ENCODE measurements at regions of chr19 and their contacts with region 1.

Region 1: GRCh38 chr19:11446652-11447301 is 11.3 kb downstream of the PRKCSH start:
- DNase-seq: peak; percentile 62 to 98 (median 88)

Region 2: DNA sequence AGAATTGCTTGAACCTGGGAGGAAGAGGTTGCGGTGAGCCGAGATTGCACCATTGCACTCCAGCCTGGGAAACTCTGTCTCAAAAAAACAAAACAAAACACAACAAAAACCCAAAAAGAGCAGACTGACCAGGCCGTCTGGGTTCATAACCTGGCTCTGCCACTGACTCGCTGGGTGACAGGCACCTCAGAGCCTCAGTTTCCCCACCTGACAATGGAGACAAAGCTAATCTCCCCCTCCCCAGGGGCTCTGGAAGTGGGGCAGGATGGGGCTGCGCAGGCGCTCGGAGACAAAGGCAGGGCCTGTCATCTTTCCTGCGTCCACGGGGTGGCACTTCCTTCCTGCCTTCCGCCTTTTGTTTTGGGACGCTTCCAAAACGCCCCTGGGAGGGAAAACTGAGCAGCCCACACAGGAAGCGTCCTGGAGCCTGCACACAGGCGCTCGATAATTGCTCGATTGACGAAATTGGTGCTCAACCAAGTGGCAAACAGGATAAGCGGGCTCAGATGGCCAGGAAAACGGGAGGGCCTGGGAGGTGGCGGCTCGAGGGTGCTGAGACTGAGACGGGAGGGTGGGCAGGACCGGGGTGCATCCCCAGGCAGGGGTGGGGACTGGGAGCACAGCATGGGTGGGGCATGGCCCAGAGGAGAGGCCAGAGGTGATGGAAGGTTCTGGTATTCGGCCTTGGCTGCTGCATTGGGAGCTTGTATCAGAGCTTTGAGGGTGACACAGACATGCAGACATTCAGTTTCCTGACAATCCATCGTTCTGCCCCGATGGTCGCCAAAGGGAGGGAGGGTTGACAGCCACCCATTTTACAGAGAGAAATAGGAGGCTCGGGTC is 309.0 kb before region 1 on chr19:
- intact Hi-C with region 1: loop called (anchors 10 kb)
- DNase-seq: peak; percentile 69 to 96 (median 79)

Region 3: DNA sequence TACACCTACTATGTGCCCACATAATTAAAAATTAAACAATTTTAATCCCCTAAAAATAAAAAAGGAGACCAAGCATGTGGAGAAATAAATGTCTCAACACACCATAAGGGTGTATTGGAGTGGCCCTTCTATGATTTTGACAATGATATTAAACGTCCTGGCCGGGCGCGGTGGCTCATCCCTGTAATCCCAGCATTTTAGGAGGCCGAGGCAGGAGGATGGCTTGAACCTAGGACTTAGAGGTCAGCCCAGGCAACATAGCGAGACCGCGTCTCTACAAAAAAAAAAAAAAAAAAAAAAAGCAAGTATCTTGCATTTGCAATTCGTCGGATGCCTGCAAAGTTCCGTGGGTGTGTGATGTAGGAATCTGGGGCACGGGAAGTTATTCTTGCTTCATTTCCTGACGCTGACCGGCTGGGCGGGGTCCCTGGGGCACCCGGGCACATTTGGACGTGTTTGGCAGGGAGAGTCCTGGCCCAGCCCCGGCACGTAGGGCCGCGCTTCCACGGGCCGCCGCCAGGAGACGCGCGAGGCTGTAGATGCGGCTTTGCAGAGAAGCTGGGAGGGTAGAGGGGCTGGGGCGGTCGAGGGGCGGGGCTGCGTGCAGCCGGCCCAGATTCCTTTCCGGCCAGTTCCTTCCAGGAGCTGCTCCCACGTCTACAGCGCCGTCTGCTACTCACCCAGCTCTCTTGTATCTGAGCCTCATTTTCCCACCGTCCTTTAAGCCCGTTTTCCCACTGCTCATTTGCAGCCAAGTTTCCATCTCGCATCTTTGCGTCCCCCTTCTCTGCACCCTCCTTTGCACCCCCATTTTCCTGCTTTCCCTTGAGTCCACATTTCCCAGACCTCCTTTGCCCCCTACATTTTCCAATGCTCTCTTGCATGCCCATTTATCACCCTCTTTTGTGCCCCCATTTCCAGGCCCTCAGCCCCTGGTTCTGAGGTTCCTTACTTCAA is 153.1 kb before region 1 on chr19:
- intact Hi-C with region 1: loop called (anchors 1 kb)
- DNase-seq: peak; percentile 80 to 98 (median 90)

Region 4: DNA sequence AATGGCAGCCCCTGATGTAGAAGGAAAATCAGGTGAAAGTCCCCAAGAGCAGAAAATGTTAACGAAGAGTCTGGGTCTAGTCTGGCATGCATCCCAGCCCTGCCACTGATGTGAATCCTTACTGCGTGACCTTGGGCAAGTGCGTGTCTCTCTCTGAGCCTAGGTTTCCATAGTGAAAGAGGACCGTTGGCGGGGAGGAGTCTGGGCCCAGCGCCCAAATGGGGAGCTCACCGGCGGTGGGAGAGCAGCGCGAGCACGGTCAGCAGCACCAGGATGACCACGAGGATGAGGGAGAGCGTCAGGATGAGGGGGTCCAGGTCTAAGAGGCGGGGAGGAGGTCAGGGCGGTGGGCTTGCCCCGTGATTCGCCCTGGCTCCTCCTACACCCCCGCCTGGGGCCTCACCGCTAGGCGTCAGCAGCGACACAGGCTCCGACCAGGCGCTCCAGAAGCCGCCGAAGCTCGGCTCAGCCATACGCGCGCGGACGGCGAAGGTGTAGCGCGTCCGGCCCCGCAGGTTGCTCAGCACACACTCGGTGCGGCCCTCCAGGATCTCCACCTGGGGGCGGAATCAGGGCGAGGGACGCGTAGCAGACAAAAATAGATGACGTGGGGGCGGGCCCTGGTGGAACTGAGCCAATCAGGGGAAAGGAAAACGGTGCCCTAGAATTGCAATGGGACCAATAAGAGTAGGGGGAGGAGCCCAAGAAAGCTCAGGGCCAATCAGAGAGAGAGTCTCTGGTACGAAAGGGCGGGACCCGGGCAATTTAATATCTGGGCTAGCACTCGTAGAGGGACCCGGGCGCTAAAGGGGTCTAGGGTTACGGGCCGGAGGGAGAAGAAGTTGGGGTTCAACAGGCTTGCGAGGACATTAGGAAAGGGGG is 65.9 kb before region 1 on chr19:
- intact Hi-C with region 1: loop called (anchors 5 kb)
- DNase-seq: peak; percentile 88 to 99 (median 94)

Region 5: GRCh38 chr19:11482384-11483050 is 35.7 kb after region 1 on chr19:
- intact Hi-C with region 1: loop called (anchors 2 kb)
- DNase-seq: peak; percentile 80 to 98 (median 89)

Measured in posterior cingulate gyrus (tissue), 11 donors.